ENCODE measurements at regions of chr10 and their contacts with region 1.

Region 1: DNA sequence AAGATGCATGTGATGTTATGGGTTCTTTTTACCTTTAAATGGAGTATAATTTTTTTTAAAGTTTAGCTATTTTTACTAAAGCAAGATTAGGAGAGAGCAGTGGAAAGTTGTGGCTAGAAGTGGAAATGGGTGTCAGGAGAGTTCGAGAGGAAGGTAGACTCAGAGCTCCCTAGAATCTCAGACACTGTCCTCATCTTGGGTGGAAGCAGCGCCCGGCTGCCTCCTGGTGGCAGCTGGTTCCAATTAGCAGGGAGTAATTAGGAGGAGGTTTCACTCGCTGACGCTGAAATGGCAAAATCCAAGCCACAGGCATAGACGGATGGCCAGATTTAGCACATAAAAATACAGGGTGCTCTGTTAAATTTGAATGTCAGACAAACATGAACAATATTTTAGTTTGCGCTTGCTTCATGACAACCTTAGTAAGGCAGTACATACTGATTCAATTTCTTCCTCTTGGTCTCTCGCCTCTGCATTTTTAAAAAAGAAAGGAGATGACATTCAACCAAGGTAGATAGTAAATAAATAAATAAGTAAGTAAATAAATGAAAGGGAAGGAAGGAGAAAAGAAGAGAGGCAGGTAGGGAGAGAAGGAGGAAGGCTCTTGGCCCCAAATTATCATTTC is 58.5 kb downstream of the LGI1 start:
- DNase-seq: peak; percentile 72 to 89
- ATAC-seq: peak; percentile 88
- H3K4me3 ChIP-seq: no peak overlapping the region
- H3K27ac ChIP-seq: no peak overlapping the region
- H3K4me1 ChIP-seq: no peaks in the 10 kb centered on the region
- H3K27me3 ChIP-seq: no peaks in the 10 kb centered on the region

Region 2: DNA sequence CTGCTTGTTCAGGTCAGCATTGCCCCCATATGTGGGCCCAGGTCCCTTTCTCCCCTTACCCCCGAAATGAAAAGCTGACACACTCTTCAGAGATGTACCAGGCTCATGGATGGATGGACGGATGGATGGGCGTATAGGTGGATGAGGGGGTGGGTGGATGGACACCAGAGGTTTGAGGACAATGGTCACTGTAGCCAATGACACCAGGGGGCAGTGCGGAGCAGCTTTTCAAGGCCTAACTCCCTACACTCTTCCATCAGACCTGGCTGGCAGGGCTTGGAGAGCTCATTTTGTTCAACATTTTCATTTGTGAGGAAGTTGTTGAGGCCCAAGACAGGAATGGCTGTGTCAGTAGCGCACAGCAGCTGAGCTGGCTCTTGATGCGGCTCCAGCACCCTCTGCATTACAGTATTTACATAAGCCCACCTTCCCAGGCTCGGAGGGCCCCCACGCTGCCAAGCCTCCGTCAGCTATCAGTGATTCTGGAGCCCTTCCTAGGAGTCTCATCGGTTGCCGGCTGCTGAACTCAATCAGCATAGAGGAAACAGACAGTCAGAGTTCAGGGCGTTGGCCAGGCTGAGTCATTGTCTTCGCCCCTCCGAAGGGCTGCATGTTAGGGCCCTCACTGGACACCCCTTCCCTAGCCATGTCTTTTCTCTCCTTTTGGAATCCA is 261.3 kb before region 1 on chr10:
- intact Hi-C with region 1: loop called in 1 of 2 experiments (anchors 5 kb)
- DNase-seq: peak; percentile 88 to 93
- ATAC-seq: peak; percentile 84
- H3K4me3 ChIP-seq: no peak overlapping the region
- H3K27ac ChIP-seq: no peak overlapping the region
- H3K4me1 ChIP-seq: no peaks in the 10 kb centered on the region
- H3K27me3 ChIP-seq: no peaks in the 10 kb centered on the region

Region 3: GRCh38 chr10:93757136-93757535 is 59.1 kb before region 1 on chr10:
- intact Hi-C with region 1: loop called in 1 of 2 experiments (anchors 5 kb)
- DNase-seq: peak in 1 of 2 donors; percentile 51
- ATAC-seq: peak; percentile 62
- H3K4me3 ChIP-seq: peak overlapping the region; percentile 55 to 96
- H3K27ac ChIP-seq: no peak overlapping the region
- H3K4me1 ChIP-seq: peaks cover 4 to 5% of the 10 kb centered on the region in 2 donors
- H3K27me3 ChIP-seq: no peaks in the 10 kb centered on the region

Measured in aorta (tissue), 5 donors.